GM10248 (cell line): ENCODE measurements at regions of chr4 and their contacts with region 1.

Region 1: DNA sequence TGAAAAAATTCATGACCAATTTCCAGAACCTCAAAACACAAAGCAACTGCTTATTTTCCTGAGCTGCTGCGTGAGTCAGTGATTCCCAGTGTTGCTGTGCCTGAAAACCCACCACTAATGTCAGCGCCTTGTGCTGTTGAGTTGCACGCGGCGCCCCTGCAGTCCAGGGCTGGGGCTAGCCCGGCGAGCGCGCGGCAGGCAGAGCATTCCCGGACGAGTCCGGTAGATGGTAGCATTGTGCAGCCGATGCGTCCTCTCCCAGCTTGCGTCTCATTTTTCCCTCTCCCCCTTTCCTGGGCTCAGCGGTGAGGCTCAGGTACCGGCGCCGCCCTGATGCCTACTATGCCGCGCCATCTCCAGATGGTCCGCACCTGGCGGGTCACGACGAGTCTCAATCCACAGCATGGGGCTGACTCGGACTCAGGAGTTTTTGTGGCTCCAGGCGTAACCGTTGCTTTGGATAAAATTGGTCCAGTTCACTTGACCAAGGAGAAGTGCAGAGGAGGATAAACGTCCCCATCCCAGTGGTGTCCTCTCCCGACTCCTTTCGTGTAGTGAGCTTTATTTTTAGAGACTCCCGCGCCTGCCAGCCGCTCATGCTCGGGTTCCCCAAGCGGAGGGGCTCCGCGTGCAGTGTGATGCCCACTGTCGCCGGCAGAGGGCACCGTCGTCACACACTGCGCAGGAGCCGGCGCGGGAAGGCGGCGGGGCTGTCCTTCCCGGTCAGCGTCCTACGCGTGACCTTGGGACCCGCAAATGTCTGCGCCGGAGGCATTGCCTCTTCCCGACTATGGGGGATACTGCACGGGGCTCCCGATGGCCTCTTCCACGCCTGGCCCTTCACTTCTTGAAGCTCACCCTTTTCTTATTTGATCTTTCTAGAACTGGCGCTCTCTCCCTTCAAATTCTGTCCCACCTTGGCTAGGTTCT is 53.6 kb upstream of the IGFBP7 start:
- DNase-seq: peak; percentile 82
- CTCF ChIP-seq: peak; percentile 98

Region 2: GRCh38 chr4:56958111-56958517 is 205.7 kb before region 1 on chr4:
- CTCF ChIA-PET with region 1: no interaction called
- POLR2A ChIA-PET with region 1: no interaction called
- DNase-seq: no peak
- CTCF ChIP-seq: no peak

Region 3: GRCh38 chr4:57147335-57148060 is 16.3 kb before region 1 on chr4:
- CTCF ChIA-PET with region 1: interaction called, 31 read pairs
- POLR2A ChIA-PET with region 1: no interaction called
- DNase-seq: no peak
- CTCF ChIP-seq: no peak

Region 4: DNA sequence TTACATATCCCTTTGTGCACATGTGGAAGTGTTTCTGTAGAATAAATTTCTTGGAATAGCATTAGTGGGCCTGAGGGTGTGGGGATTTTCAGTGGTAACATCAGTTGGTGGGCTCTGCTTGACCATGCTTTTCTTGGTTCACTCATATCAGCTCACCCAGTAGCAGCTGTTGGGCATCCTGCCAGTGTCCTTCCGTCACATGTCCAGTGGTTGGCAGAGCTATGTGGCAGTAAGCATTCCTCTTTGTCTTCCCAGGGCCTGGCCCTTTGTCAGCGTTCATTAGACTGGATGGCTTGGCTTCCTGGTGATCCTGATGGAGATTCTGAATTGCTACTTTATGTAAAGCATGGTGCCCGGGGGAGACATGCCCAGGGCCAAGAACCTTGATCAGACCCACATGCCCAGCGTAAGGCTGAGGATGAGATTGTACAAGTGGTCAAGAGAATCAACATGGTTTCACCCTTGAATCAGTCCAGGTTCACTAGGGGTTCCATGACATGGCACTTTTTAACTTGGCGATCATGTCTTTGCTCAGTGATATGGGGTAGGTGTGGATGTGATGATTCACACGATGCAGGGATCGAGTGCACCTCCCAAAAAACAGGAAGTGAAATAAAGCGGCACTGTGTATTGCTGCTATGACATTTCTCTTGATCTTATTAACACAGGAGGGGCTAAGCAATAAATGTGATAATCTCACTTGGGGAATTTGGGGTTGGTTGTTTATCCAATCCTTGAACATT is 18.5 kb after region 1 on chr4:
- CTCF ChIA-PET with region 1: interaction called, 45 read pairs
- POLR2A ChIA-PET with region 1: no interaction called
- DNase-seq: no peak
- CTCF ChIP-seq: no peak

Region 5: GRCh38 chr4:57190601-57191481 is 27.0 kb after region 1 on chr4:
- CTCF ChIA-PET with region 1: interaction called, 80 read pairs
- POLR2A ChIA-PET with region 1: no interaction called
- DNase-seq: peak; percentile 36
- CTCF ChIP-seq: peak; percentile 51

Region 6: GRCh38 chr4:57200928-57201327 is 37.1 kb after region 1 on chr4:
- CTCF ChIA-PET with region 1: interaction called, 35 read pairs
- POLR2A ChIA-PET with region 1: no interaction called
- DNase-seq: no peak
- CTCF ChIP-seq: no peak

Region 7: GRCh38 chr4:57220172-57220571 is 56.4 kb after region 1 on chr4:
- CTCF ChIA-PET with region 1: interaction called, 19 read pairs
- POLR2A ChIA-PET with region 1: no interaction called
- DNase-seq: no peak
- CTCF ChIP-seq: no peak

Region 8: GRCh38 chr4:57426779-57427395 is 263.1 kb after region 1 on chr4:
- CTCF ChIA-PET with region 1: interaction called, 15 read pairs
- POLR2A ChIA-PET with region 1: no interaction called
- DNase-seq: peak; percentile 55
- CTCF ChIP-seq: peak; percentile 80